ENCODE measurements at regions of chr13 and their contacts with region 1.

Region 1: GRCh38 chr13:27533155-27533643 is 82.8 kb upstream of the MTIF3 start:
- H3K4me3 Mint-ChIP-seq: peak overlapping the region; percentile 51
- H3K27ac Mint-ChIP-seq: no peak overlapping the region
- H3K4me1 Mint-ChIP-seq: peaks cover 9% of the 10 kb centered on the region
- H3K27me3 Mint-ChIP-seq: peaks cover 3% of the 10 kb centered on the region

Region 2: GRCh38 chr13:27374650-27375049 is 158.5 kb before region 1 on chr13:
- intact Hi-C with region 1: loop called (anchors 2 kb)
- H3K4me3 Mint-ChIP-seq: no peak overlapping the region
- H3K27ac Mint-ChIP-seq: no peak overlapping the region
- H3K4me1 Mint-ChIP-seq: no peaks in the 10 kb centered on the region
- H3K27me3 Mint-ChIP-seq: peaks cover 9% of the 10 kb centered on the region

Region 3: GRCh38 chr13:27573265-27573664 is 40.1 kb after region 1 on chr13:
- intact Hi-C with region 1: no loop called
- H3K4me3 Mint-ChIP-seq: no peak overlapping the region
- H3K27ac Mint-ChIP-seq: no peak overlapping the region
- H3K4me1 Mint-ChIP-seq: peaks cover 21% of the 10 kb centered on the region
- H3K27me3 Mint-ChIP-seq: no peaks in the 10 kb centered on the region